HEK293T (cell line): ENCODE measurements at regions of chr1 and their contacts with region 1.

Region 1: GRCh38 chr1:153633716-153634665 is at the start of gene CHTOP:
- DNase-seq: peak; percentile 97

Region 2: GRCh38 chr1:153357073-153357852 is 276.7 kb before region 1 on chr1:
- CTCF ChIA-PET with region 1: no interaction called
- POLR2A ChIA-PET with region 1: no interaction called
- DNase-seq: no peak

Region 3: DNA sequence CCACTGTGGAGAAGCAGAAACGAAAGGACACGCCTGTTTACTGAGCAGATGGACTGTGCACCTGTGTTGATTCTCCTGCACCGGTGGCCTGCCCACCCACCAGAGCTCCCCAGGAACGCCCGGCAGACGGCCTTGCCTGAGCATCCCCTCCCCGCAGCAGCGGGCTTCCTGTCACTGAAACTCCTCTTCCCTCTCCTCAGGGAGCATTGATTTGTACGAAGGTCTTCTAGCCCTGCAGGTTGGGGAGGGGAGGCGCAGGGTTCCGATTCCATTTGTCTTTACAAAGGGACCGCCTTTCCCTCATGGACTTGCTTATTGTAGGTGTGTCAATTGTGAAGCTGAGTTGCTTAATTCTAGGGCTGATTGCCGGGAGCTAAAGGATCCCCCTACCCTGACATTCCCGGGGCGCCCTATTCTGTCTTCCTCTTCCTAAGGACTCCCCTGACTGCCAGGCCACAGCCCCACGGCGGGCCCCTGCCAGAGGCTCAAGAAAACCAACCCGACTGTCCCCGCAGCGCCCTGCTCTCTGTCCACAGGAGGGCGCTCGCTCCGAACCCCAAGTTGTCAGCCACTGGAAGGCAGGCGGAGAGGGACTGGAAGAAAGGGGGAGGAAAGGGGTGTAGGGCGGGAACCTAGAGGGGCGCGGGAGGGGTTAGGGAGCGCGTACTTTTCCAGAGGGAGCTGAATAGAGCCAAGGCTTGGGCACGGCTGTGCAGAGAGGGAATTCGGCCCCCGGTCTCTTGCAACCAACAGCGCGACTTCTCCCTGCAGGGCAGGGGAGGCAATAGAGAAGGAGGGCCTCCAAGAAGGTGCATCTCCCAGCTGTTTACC is 101.0 kb before region 1 on chr1:
- CTCF ChIA-PET with region 1: no interaction called
- POLR2A ChIA-PET with region 1: interaction called, 18 read pairs
- DNase-seq: peak; percentile 72

Region 4: GRCh38 chr1:153572569-153573015 is 61.4 kb before region 1 on chr1:
- CTCF ChIA-PET with region 1: interaction called, 4 read pairs
- POLR2A ChIA-PET with region 1: interaction called, 20 read pairs
- DNase-seq: no peak

Region 5: GRCh38 chr1:153617675-153618074 is 16.3 kb before region 1 on chr1:
- CTCF ChIA-PET with region 1: no interaction called
- POLR2A ChIA-PET with region 1: interaction called, 31 read pairs
- DNase-seq: no peak

Region 6: GRCh38 chr1:153670859-153671627 is 37.1 kb after region 1 on chr1 and contains the start of gene ILF2:
- CTCF ChIA-PET with region 1: no interaction called
- POLR2A ChIA-PET with region 1: interaction called, 20 read pairs
- DNase-seq: peak; percentile 99

Region 7: GRCh38 chr1:153928791-153929341 is 294.9 kb after region 1 on chr1:
- CTCF ChIA-PET with region 1: no interaction called
- POLR2A ChIA-PET with region 1: no interaction called
- DNase-seq: no peak